ENCODE measurements at regions of chr20 and their contacts with region 1.

Region 1: GRCh38 chr20:32918296-32918695 is 59.6 kb downstream of the EFCAB8 start:
- DNase-seq: no peak
- H3K4me3 ChIP-seq: no peak overlapping the region
- H3K27ac ChIP-seq: no peak overlapping the region
- H3K4me1 ChIP-seq: no peaks in the 10 kb centered on the region
- H3K27me3 ChIP-seq: no peaks in the 10 kb centered on the region
- CTCF ChIP-seq: no peak
- EP300 ChIP-seq: no peak
- POLR2A ChIP-seq: no peak

Region 2: DNA sequence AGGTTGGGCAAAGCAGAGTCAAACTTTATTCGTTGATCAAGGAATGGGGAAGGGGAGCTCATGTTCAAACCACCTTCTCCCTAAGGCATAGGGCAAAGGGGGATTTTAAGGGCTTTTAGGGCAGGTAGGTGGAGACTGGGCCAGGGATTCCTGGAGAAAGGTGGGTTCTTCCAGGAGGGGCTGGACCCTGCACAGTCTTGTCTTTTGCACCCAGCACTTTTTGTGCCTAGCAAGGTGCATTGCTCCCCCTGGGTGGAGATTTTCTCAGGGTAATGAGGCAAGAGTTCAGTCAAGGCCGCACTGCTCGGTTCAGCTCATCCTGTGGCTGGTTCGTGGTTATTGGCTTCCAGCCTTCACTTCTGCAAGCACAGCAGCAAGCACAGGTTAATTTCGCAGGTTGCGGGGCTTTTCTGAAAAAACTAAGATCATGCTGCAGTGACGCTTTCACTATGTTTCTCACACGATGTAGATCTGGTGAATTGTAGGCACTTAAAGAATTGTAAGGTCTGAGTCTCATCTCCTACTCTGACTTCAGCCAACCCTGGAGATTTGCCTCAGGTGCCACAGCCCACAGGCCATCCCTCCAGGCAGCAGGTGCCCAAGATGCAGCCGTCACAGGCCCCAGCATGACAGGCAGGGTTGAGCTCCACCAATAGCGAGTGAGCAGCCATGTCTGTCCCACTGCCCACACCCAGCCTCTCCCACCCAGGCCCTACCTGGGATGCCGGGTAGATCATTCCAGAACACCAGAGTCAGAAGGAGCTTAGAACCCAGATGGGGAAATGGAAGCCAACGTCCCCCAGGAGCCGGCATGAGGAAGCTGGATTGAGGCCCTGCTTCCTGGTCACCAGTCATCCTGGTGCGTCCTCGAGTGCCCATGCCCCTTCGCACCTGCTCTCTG is 48.8 kb after region 1 on chr20:
- intact Hi-C with region 1: no loop called
- DNase-seq: peak; percentile 26
- H3K4me3 ChIP-seq: no peak overlapping the region
- H3K27ac ChIP-seq: no peak overlapping the region
- H3K4me1 ChIP-seq: no peaks in the 10 kb centered on the region
- H3K27me3 ChIP-seq: no peaks in the 10 kb centered on the region
- CTCF ChIP-seq: no peak
- EP300 ChIP-seq: no peak
- POLR2A ChIP-seq: no peak

Region 3: GRCh38 chr20:33285861-33286495 is 367.7 kb after region 1 on chr20:
- intact Hi-C with region 1: loop called (anchors 5 kb)
- DNase-seq: no peak
- H3K4me3 ChIP-seq: no peak overlapping the region
- H3K27ac ChIP-seq: no peak overlapping the region
- H3K4me1 ChIP-seq: no peaks in the 10 kb centered on the region
- H3K27me3 ChIP-seq: peaks cover 0 to 13% (median 0%) of the 10 kb centered on the region in 3 donors
- CTCF ChIP-seq: no peak
- EP300 ChIP-seq: no peak
- POLR2A ChIP-seq: no peak